Posterior vena cava (tissue), 2 donors: ENCODE measurements at regions of chr14 and their contacts with region 1.

Region 1: DNA sequence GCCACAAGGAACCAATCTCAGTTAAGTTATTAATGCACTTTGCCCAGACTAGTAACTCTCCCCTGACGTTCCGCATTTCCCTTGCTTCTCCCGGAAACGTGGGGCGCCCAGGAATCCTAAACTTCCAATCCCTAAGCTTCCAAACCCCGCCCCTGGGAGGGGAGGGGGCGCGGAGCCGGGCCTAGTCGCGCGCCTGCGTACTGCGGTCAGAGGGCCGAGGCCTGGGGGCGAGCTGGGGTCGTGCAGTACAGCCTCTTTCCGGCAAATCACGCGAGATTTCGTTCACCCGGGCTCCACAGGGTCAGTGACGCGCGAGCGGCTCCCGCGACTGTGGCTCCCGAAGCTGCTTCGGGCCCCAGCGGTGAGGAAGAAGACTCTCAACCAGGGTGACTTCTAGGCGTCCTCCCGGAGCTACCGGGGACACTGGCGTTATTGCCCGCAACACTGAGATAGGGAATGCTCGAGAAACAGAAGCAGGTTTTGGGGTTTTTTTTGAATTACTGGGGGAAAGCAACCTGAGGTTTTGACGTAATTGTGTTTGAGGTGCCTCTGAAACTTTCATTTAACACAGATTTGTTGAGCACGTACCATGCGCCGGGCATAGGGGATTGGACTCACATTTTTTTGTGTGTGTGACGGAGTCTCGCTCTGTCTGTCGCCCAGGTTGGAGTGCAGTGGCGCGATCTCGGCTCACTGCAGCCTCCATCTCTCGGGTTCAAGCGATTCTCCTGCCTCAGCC is at the start of gene PTGR2:
- DNase-seq: peak; percentile 98
- total RNA-seq, gene PTGR2: 5.6 to 9.2 TPM

Region 2: GRCh38 chr14:73728717-73729330 is 123.0 kb before region 1 on chr14:
- intact Hi-C with region 1: loop called in 1 of 2 experiments (anchors 10 kb)
- DNase-seq: peak; percentile 95